SK-N-SH (cell line): ENCODE measurements at regions of chr4 and their contacts with region 1.

Region 1: GRCh38 chr4:112765317-112765975 is 128.5 kb downstream of the LARP7 start:
- DNase-seq: peak; percentile 71
- H3K4me3 ChIP-seq: no peak overlapping the region; a peak in 1 of 4 replicates
- H3K27ac ChIP-seq: no peak overlapping the region
- H3K4me1 ChIP-seq: no peaks in the 10 kb centered on the region
- H3K27me3 ChIP-seq: no peaks in the 10 kb centered on the region
- CTCF ChIP-seq: peak; percentile 65
- EP300 ChIP-seq: no peak
- RAD21 ChIP-seq: peak; percentile 76

Region 2: GRCh38 chr4:112257098-112257497 is 508.3 kb before region 1 on chr4:
- CTCF ChIA-PET with region 1: no interaction called
- POLR2A ChIA-PET with region 1: no interaction called
- DNase-seq: no peak
- H3K4me3 ChIP-seq: no peak overlapping the region
- H3K27ac ChIP-seq: no peak overlapping the region
- H3K4me1 ChIP-seq: no peaks in the 10 kb centered on the region
- H3K27me3 ChIP-seq: no peaks in the 10 kb centered on the region
- CTCF ChIP-seq: no peak
- EP300 ChIP-seq: no peak
- RAD21 ChIP-seq: no peak

Region 3: GRCh38 chr4:112327965-112328733 is 437.3 kb before region 1 on chr4:
- CTCF ChIA-PET with region 1: interaction called, 17 read pairs
- POLR2A ChIA-PET with region 1: no interaction called
- DNase-seq: peak; percentile 27
- H3K4me3 ChIP-seq: no peak overlapping the region
- H3K27ac ChIP-seq: no peak overlapping the region; a peak in 1 of 4 replicates
- H3K4me1 ChIP-seq: peaks cover 0 to 12% of the 10 kb centered on the region in 2 experiments; a peak in 2 of 4 replicates
- H3K27me3 ChIP-seq: no peaks in the 10 kb centered on the region
- CTCF ChIP-seq: peak; percentile 69
- EP300 ChIP-seq: no peak
- RAD21 ChIP-seq: peak; percentile 88

Region 4: DNA sequence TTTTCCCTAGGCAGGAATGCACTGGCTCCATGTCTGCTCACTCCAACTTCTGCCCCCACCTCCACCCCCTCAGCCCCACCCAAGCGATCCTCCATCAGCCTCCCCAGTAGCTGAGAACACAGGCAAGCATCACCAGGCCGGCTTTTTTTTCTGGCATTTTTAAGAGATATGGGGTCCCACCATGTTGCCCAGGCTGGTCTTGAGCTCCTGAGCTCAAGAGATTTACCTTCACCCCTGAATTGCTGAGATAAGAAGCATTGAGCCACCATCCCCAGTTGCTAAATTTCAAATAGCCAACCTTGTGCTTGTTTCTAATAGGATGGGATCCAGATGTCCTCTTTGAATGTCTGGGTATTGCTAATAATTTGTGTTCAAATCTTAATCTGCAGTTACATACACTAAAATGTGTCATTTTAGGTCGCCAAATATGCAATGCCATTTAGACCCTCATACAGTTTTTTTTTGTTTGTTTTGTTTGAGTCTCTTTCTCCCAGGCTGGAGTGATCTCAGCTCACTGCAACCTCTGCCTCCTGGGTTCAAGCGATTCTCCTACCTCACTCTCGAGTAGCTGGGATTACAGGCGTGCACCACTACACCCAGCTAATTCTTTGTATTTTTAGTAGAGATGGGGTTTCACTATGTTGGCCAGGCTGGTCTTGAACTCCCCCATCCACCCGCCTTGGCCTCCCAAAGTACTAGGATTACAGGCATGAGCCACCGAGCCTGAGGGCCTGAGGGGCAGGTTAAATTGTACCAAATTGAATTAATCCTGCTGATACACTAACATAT is 119.7 kb before region 1 on chr4:
- CTCF ChIA-PET with region 1: interaction called, 17 read pairs
- POLR2A ChIA-PET with region 1: no interaction called
- DNase-seq: no peak
- H3K4me3 ChIP-seq: no peak overlapping the region
- H3K27ac ChIP-seq: no peak overlapping the region
- H3K4me1 ChIP-seq: 0 out of 4 replicates have a peak, but pooled peaks cover 0 to 3% of the 10 kb centered on the region in 2 experiments
- H3K27me3 ChIP-seq: no peaks in the 10 kb centered on the region
- CTCF ChIP-seq: no peak
- EP300 ChIP-seq: no peak
- RAD21 ChIP-seq: no peak

Region 5: GRCh38 chr4:112747036-112747435 is 18.4 kb before region 1 on chr4:
- CTCF ChIA-PET with region 1: interaction called, 70 read pairs
- POLR2A ChIA-PET with region 1: no interaction called
- DNase-seq: no peak
- H3K4me3 ChIP-seq: no peak overlapping the region
- H3K27ac ChIP-seq: no peak overlapping the region
- H3K4me1 ChIP-seq: peaks cover 0 to 4% of the 10 kb centered on the region in 2 experiments; a peak in 1 of 4 replicates
- H3K27me3 ChIP-seq: no peaks in the 10 kb centered on the region
- CTCF ChIP-seq: no peak
- EP300 ChIP-seq: no peak
- RAD21 ChIP-seq: no peak

Region 6: GRCh38 chr4:113094802-113095201 is 329.4 kb after region 1 on chr4:
- CTCF ChIA-PET with region 1: interaction called, 20 read pairs
- POLR2A ChIA-PET with region 1: no interaction called
- DNase-seq: peak; percentile 37
- H3K4me3 ChIP-seq: no peak overlapping the region
- H3K27ac ChIP-seq: no peak overlapping the region
- H3K4me1 ChIP-seq: peaks cover 0 to 4% of the 10 kb centered on the region in 2 experiments; a peak in 2 of 4 replicates
- H3K27me3 ChIP-seq: no peaks in the 10 kb centered on the region
- CTCF ChIP-seq: peak; percentile 81
- EP300 ChIP-seq: no peak
- RAD21 ChIP-seq: peak; percentile 91